Aorta (tissue), 5 donors: ENCODE measurements at regions of chr3 and their contacts with region 1.

Region 1: GRCh38 chr3:98022978-98023820 is 11.9 kb downstream of the GABRR3 start:
- DNase-seq: peak; percentile 90 to 98
- ATAC-seq: peak; percentile 86
- H3K4me3 ChIP-seq: no peak overlapping the region
- H3K27ac ChIP-seq: no peak overlapping the region
- H3K4me1 ChIP-seq: no peaks in the 10 kb centered on the region
- H3K27me3 ChIP-seq: peaks cover 0 to 2% of the 10 kb centered on the region in 2 donors

Region 2: GRCh38 chr3:97793420-97794019 is 229.7 kb before region 1 on chr3:
- intact Hi-C with region 1: loop called (anchors 1 kb)
- DNase-seq: no peak
- ATAC-seq: peak; percentile 63
- H3K4me3 ChIP-seq: no peak overlapping the region
- H3K27ac ChIP-seq: no peak overlapping the region
- H3K4me1 ChIP-seq: no peaks in the 10 kb centered on the region
- H3K27me3 ChIP-seq: no peaks in the 10 kb centered on the region